K562 (cell line): ENCODE measurements at regions of chr1 and their contacts with region 1.

Region 1: GRCh38 chr1:162765788-162766187 is 24.7 kb upstream of the HSD17B7 start:
- DNase-seq: no peak
- ATAC-seq: no peak; the same call in 2 of the 3 replicates
- H3K4me3 ChIP-seq: no peak overlapping the region
- H3K27ac ChIP-seq: no peak overlapping the region
- H3K4me1 ChIP-seq: no peaks in the 10 kb centered on the region
- H3K27me3 ChIP-seq: no peaks in the 10 kb centered on the region
- CTCF ChIP-seq: no peak
- EP300 ChIP-seq: no peak
- POLR2A ChIP-seq: no peak
- RAD21 ChIP-seq: no peak

Region 2: GRCh38 chr1:162697140-162697895 is 68.5 kb before region 1 on chr1:
- CTCF ChIA-PET with region 1: no interaction called
- POLR2A ChIA-PET with region 1: interaction called, 3 read pairs
- in situ Hi-C with region 1: no loop called
- intact Hi-C with region 1: loop called (anchors 1 kb)
- DNase-seq: no peak
- ATAC-seq: no peak
- H3K4me3 ChIP-seq: no peak overlapping the region
- H3K27ac ChIP-seq: no peak overlapping the region
- H3K4me1 ChIP-seq: peaks cover 0 to 8% of the 10 kb centered on the region in 2 experiments; a peak in 4 of 5 replicates
- H3K27me3 ChIP-seq: peaks cover 0 to 5% of the 10 kb centered on the region in 2 experiments; a peak in 1 of 5 replicates
- CTCF ChIP-seq: no peak
- EP300 ChIP-seq: no peak
- POLR2A ChIP-seq: no peak
- RAD21 ChIP-seq: no peak